Endothelial cell of umbilical vein (primary cell): ENCODE measurements at regions of chr12 and their contacts with region 1.

Region 1: DNA sequence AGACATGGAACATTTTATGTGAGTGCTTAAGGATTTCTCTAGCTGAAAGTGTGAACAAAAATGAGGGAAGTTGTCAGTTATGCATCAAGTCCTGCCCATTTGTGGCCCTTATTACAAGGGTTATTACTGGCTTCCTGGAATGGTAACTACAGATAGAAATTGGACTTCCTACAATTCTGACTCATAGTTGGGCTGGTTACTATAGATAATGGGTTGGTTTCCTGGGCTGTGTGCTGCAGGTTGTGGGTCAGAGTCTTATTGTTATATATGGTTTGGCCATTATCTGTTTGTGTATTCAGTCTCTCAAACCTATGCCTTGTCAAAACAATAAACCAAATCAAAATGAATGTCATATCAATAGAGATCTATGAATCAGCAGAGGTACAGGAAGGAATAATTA is 313.7 kb downstream of the ADAMTS20 start:
- DNase-seq: peak; percentile 99
- H3K4me3 ChIP-seq: no peak overlapping the region
- H3K27ac ChIP-seq: peak overlapping the region; percentile 95
- H3K4me1 ChIP-seq: peaks cover 54% of the 10 kb centered on the region
- H3K27me3 ChIP-seq: no peaks in the 10 kb centered on the region
- CTCF ChIP-seq: no peak
- POLR2A ChIP-seq: peak; percentile 94

Region 2: GRCh38 chr12:42589465-42590329 is 648.6 kb before region 1 on chr12 and contains the start of gene PRICKLE1:
- CTCF ChIA-PET with region 1: interaction called, 4 read pairs
- POLR2A ChIA-PET with region 1: no interaction called
- dilution Hi-C with region 1: no loop called
- intact Hi-C with region 1: loop called (anchors 1 kb)
- DNase-seq: peak; percentile 69
- H3K4me3 ChIP-seq: peak within 1 kb of the TSS; percentile 81 to 99 (median 86)
- H3K27ac ChIP-seq: peak within 1 kb of the TSS; percentile 59
- H3K4me1 ChIP-seq: peaks cover 38% of the 10 kb centered on the region
- H3K27me3 ChIP-seq: no peaks in the 10 kb centered on the region
- CTCF ChIP-seq: no peak
- POLR2A ChIP-seq: peak; percentile 68
- total RNA-seq, gene PRICKLE1: 69.0 and 86.0 TPM in 2 replicates

Region 3: DNA sequence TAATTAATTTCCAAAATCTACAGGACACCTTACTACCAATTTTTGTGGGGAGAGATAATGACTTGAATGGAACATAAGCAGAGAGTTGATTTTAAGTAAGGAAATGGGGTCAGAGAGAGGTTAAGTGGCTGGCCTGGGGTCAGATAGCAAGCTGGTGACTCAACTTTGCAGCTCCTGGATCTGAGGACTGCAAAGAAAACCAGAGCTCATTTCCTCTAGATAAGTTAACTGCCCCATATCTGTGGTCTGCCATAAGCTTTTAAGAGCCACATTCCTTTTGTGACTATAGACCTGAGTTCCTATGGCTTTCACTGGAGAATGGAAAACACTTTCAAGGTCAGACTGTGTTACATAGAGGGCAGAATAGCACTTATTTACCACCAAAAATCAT is 447.5 kb before region 1 on chr12:
- CTCF ChIA-PET with region 1: interaction called, 7 read pairs
- POLR2A ChIA-PET with region 1: interaction called, 6 read pairs
- dilution Hi-C with region 1: no loop called
- intact Hi-C with region 1: loop called (anchors 1 kb)
- DNase-seq: peak; percentile 96
- H3K4me3 ChIP-seq: peak overlapping the region in 1 of 3 experiments; percentile 2
- H3K27ac ChIP-seq: peak overlapping the region; percentile 75
- H3K4me1 ChIP-seq: peaks cover 32% of the 10 kb centered on the region
- H3K27me3 ChIP-seq: no peaks in the 10 kb centered on the region
- CTCF ChIP-seq: no peak
- POLR2A ChIP-seq: peak; percentile 60

Region 4: GRCh38 chr12:42969357-42969756 is 268.9 kb before region 1 on chr12:
- CTCF ChIA-PET with region 1: interaction called, 3 read pairs
- POLR2A ChIA-PET with region 1: no interaction called
- dilution Hi-C with region 1: no loop called
- intact Hi-C with region 1: loop called (anchors 1 kb)
- DNase-seq: peak; percentile 82
- H3K4me3 ChIP-seq: no peak overlapping the region
- H3K27ac ChIP-seq: peak overlapping the region; percentile 63
- H3K4me1 ChIP-seq: peaks cover 42% of the 10 kb centered on the region
- H3K27me3 ChIP-seq: no peaks in the 10 kb centered on the region
- CTCF ChIP-seq: no peak
- POLR2A ChIP-seq: peak; percentile 61

Region 5: DNA sequence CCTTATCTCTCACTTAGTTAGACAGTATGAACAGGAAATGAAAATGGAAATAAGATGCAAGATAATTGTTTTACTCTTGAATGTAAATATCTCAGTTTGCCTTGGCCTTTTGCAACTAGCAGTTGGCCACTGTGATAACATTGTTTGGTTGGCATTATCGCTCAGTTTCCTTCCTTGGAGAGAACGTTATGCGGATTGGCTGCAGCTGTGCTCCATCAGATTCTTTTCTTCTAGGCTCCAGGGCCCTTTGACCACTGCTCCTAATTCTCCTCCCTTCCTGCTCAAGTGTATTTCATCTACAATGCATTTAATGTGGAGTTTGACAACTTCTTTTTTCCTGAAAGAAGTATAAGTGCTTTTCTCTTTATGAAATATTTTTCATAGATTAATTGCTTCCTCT is 29.5 kb after region 1 on chr12:
- CTCF ChIA-PET with region 1: interaction called, 4 read pairs
- POLR2A ChIA-PET with region 1: interaction called, 3 read pairs
- dilution Hi-C with region 1: no loop called
- intact Hi-C with region 1: loop called (anchors 1 kb)
- DNase-seq: peak; percentile 92
- H3K4me3 ChIP-seq: peak overlapping the region in 1 of 3 experiments; percentile 23
- H3K27ac ChIP-seq: peak overlapping the region; percentile 64
- H3K4me1 ChIP-seq: peaks cover 25% of the 10 kb centered on the region
- H3K27me3 ChIP-seq: no peaks in the 10 kb centered on the region
- CTCF ChIP-seq: no peak
- POLR2A ChIP-seq: peak; percentile 78